Aorta (tissue), 5 donors: ENCODE measurements at regions of chr11 and their contacts with region 1.

Region 1: GRCh38 chr11:12485328-12485727 is 108.0 kb downstream of the PARVA start:
- DNase-seq: no peak
- ATAC-seq: no peak
- H3K4me3 ChIP-seq: no peak overlapping the region
- H3K27ac ChIP-seq: no peak overlapping the region
- H3K4me1 ChIP-seq: no peaks in the 10 kb centered on the region
- H3K27me3 ChIP-seq: no peaks in the 10 kb centered on the region

Region 2: GRCh38 chr11:12509371-12509770 is 24.0 kb after region 1 on chr11:
- intact Hi-C with region 1: loop called in 1 of 2 experiments (anchors 1 kb)
- DNase-seq: no peak
- ATAC-seq: no peak
- H3K4me3 ChIP-seq: no peak overlapping the region
- H3K27ac ChIP-seq: no peak overlapping the region
- H3K4me1 ChIP-seq: peaks cover 0 to 2% of the 10 kb centered on the region in 2 donors
- H3K27me3 ChIP-seq: no peaks in the 10 kb centered on the region

Region 3: DNA sequence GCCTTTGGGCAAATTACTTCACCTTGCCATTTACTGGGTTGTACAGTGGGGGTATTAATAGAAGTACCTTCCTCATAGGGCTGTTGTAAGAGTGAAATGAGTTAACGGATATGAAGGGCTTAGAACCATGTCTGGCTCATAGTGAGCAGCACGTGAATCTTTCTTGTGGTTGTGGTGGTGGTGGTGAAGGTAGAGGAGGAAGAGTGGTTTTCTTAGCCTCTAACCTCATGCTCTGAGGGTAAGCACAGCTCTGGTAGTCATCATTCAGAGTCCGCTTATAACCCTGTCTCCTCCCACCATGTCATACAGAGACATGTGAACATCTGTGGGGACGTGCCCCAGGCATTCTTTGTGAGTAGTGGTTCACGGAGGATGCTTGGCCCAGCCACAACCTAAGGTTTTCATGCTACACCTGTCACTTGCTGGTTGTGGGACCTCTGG is 232.5 kb after region 1 on chr11:
- intact Hi-C with region 1: no loop called
- DNase-seq: no peak
- ATAC-seq: no peak
- H3K4me3 ChIP-seq: no peak overlapping the region
- H3K27ac ChIP-seq: no peak overlapping the region
- H3K4me1 ChIP-seq: no peaks in the 10 kb centered on the region
- H3K27me3 ChIP-seq: no peaks in the 10 kb centered on the region

Region 4: GRCh38 chr11:13728076-13728475 is 1242.7 kb after region 1 on chr11:
- intact Hi-C with region 1: no loop called
- DNase-seq: no peak
- ATAC-seq: no peak
- H3K4me3 ChIP-seq: no peak overlapping the region
- H3K27ac ChIP-seq: no peak overlapping the region
- H3K4me1 ChIP-seq: no peaks in the 10 kb centered on the region
- H3K27me3 ChIP-seq: no peaks in the 10 kb centered on the region